ENCODE measurements at regions of chr6 and their contacts with region 1.

Region 1: GRCh38 chr6:87589693-87590549 is at the starts of genes ORC3 and RARS2:
- DNase-seq: peak; percentile 98
- ATAC-seq: peak; percentile 100
- H3K4me3 Mint-ChIP-seq: peak within 1 kb of the TSS; percentile 86
- H3K27ac Mint-ChIP-seq: peak within 1 kb of the TSS; percentile 94
- H3K4me1 Mint-ChIP-seq: peaks cover 51% of the 10 kb centered on the region
- H3K27me3 Mint-ChIP-seq: no peaks in the 10 kb centered on the region
- total RNA-seq, gene ORC3: 38.8 to 42.6 TPM
- total RNA-seq, gene RARS2: 20.8 to 24.7 TPM

Region 2: GRCh38 chr6:87174078-87174579 is 415.8 kb before region 1 on chr6:
- CTCF ChIA-PET with region 1: no interaction called
- POLR2A ChIA-PET with region 1: no interaction called
- intact Hi-C with region 1: no loop called
- DNase-seq: no peak
- ATAC-seq: peak; percentile 33
- H3K4me3 Mint-ChIP-seq: no peak overlapping the region
- H3K27ac Mint-ChIP-seq: peak overlapping the region; percentile 29
- H3K4me1 Mint-ChIP-seq: peaks cover 81% of the 10 kb centered on the region
- H3K27me3 Mint-ChIP-seq: no peaks in the 10 kb centered on the region

Region 3: GRCh38 chr6:87322304-87323212 is 267.4 kb before region 1 on chr6 and contains the start of gene SMIM8:
- CTCF ChIA-PET with region 1: no interaction called
- POLR2A ChIA-PET with region 1: no interaction called
- intact Hi-C with region 1: loop called (anchors 1 to 5 kb)
- DNase-seq: peak; percentile 94
- ATAC-seq: peak; percentile 100
- H3K4me3 Mint-ChIP-seq: peak within 1 kb of the TSS; percentile 92
- H3K27ac Mint-ChIP-seq: peak within 1 kb of the TSS; percentile 94
- H3K4me1 Mint-ChIP-seq: peaks cover 16% of the 10 kb centered on the region
- H3K27me3 Mint-ChIP-seq: no peaks in the 10 kb centered on the region
- total RNA-seq, gene SMIM8: 8.5 to 10.1 TPM

Region 4: DNA sequence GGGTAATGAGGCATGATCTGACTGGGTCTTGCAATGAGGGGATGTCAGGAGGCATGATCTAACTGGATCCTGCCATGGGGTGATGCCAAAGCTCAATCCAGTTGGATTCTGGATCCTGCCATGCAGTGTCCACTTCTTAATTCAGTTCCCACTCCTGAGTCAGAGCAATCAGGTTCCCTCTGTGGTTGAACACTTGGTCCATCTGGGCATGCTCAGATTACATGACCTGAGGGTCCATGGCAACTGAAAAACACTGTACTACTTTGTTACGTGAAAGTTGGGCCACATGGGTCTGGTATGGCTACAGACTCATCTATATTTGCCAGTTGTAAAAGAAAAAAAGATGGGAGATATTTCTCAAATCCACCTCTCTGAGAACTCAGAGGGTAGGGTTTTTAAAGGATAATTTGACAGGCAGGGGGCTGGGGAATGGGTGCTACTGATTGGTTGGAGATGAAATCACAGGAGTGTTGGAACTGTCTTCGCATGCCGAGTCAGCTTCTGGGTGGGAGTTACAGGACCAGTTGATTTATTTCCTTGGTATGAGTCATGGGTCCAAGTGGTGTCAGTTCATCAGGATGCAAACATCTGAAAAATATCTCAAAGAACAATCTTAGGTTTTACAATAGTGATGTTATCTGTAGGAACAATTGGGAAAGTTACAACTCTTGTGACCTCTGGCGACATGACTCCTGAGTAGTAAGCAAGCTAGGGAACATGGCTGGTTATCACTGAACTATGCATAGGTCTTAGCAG is 223.7 kb before region 1 on chr6:
- CTCF ChIA-PET with region 1: no interaction called
- POLR2A ChIA-PET with region 1: no interaction called
- intact Hi-C with region 1: no loop called
- DNase-seq: no peak
- ATAC-seq: no peak
- H3K4me3 Mint-ChIP-seq: no peak overlapping the region
- H3K27ac Mint-ChIP-seq: no peak overlapping the region
- H3K4me1 Mint-ChIP-seq: no peaks in the 10 kb centered on the region
- H3K27me3 Mint-ChIP-seq: no peaks in the 10 kb centered on the region

Region 5: DNA sequence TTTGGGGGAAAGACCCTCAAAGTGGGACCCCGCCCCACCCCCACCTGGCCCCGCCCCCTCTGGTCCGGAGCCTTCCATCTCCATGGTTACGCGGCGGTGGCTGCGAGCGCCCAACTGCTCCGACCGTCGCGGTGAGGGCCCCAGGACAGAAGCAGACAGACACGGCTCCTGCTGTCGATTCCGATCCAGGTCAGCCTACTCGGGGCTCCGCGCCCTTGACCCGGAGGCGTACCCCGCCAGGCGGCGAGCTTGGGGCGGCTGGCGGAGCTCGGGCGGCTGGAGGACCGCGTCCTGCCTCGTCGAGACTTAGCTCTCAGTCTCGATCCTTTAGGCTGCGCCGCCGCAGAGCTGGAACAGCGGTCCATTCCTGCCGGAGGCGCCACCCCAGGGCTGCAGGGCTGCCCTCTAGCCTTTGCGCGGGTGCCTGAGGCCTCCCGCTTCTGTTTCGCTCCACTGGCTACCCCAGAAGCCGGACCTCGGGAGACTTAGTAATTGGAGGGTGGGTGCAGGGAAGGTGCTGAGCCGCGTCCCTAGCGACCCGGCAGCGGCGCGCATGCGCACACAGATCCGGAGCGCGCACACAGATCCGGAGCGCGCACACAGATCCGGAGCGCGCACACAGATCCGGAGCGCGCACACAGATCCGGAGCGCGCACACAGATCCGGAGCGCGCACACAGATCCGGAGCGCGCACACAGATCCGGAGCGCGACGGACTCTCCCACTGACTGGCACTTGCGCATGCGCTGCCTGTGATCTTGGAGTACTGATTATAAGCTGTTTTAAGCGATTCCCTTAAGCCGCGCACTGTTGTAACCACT is 181.8 kb before region 1 on chr6 and contains the start of gene CFAP206:
- CTCF ChIA-PET with region 1: interaction called, 3 read pairs
- POLR2A ChIA-PET with region 1: no interaction called
- intact Hi-C with region 1: loop called (anchors 1 kb)
- DNase-seq: peak; percentile 89
- ATAC-seq: peak; percentile 85
- H3K4me3 Mint-ChIP-seq: peak within 1 kb of the TSS; percentile 70
- H3K27ac Mint-ChIP-seq: no peak within 1 kb of the TSS
- H3K4me1 Mint-ChIP-seq: peaks cover 4% of the 10 kb centered on the region
- H3K27me3 Mint-ChIP-seq: peaks cover 15% of the 10 kb centered on the region
- total RNA-seq, gene CFAP206: not detected

Region 6: DNA sequence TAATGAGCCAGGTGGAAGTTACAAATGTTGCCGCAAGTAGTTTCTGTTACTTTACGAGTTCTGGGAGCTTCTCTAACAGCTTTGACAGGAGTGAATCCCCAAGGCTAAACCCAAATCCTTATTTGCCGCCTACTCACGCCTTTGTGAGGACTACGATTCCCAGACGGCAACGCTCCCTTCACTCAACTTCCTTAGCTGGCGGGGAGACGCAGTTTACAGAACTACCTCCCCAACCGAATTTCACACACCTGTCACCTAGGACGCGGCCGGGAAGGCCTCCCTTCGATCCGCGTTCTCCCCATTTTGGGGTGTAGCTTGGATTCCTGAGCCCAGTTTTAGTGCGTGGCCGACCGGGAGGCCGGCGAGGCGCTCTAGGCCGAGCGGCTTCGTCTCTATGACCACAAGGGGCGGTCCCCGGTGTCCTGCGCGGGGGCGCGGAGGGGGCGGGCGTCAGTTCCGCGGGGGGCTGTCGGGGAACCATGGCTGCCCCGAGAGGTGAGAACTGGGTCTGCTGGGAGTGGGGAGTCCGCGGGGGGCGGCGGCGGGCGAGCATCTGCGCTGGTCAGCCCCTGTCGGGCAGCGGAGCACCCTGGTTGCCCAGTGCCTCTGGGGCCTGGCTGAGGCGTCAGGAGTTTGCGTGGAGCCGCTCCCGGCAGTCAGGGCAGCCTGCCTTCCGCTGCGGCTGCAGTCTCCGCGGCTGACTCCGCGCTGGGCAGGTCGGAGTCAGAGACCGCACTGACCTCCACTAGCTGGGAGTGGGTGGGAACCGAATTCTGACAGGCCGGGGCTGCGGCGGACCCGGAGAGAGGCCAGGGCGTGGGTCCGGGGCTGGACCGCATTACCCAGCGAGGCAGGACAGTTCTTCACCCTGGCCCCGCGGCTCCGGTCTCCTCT is 117.1 kb before region 1 on chr6 and contains the start of gene SLC35A1:
- CTCF ChIA-PET with region 1: no interaction called
- POLR2A ChIA-PET with region 1: no interaction called
- intact Hi-C with region 1: loop called (anchors 1 to 5 kb)
- DNase-seq: peak; percentile 92
- ATAC-seq: peak; percentile 90
- H3K4me3 Mint-ChIP-seq: peak within 1 kb of the TSS; percentile 88
- H3K27ac Mint-ChIP-seq: peak within 1 kb of the TSS; percentile 93
- H3K4me1 Mint-ChIP-seq: peaks cover 18% of the 10 kb centered on the region
- H3K27me3 Mint-ChIP-seq: peaks cover 3% of the 10 kb centered on the region
- total RNA-seq, gene SLC35A1: 6.5 to 9.9 TPM

Region 7: GRCh38 chr6:88963139-88964090 is 1373.5 kb after region 1 on chr6 and contains the start of gene RNGTT:
- CTCF ChIA-PET with region 1: no interaction called
- POLR2A ChIA-PET with region 1: no interaction called
- intact Hi-C with region 1: loop called in 1 of 2 experiments (anchors 1 kb)
- DNase-seq: peak; percentile 99
- ATAC-seq: peak; percentile 100
- H3K4me3 Mint-ChIP-seq: peak within 1 kb of the TSS; percentile 99
- H3K27ac Mint-ChIP-seq: peak within 1 kb of the TSS; percentile 93
- H3K4me1 Mint-ChIP-seq: peaks cover 45% of the 10 kb centered on the region
- H3K27me3 Mint-ChIP-seq: no peaks in the 10 kb centered on the region
- total RNA-seq, gene RNGTT: 17.5 to 21.5 TPM